CD4-positive, alpha-beta T cell (primary cell): ENCODE measurements at regions of chr5 and their contacts with region 1.

Region 1: GRCh38 chr5:178058321-178059012 is 54.9 kb upstream of the N4BP3 start:
- DNase-seq: no peak
- ATAC-seq: no peak
- H3K4me3 ChIP-seq: no peak overlapping the region
- H3K4me3 Mint-ChIP-seq: no peak overlapping the region
- H3K27ac ChIP-seq: no peak overlapping the region
- H3K27ac Mint-ChIP-seq: no peak overlapping the region
- H3K4me1 ChIP-seq: peaks cover 4% of the 10 kb centered on the region
- H3K4me1 Mint-ChIP-seq: peaks cover 5% of the 10 kb centered on the region
- H3K27me3 ChIP-seq: no peaks in the 10 kb centered on the region
- H3K27me3 Mint-ChIP-seq: no peaks in the 10 kb centered on the region
- CTCF ChIP-seq: no peak

Region 2: GRCh38 chr5:177607452-177608192 is 450.8 kb before region 1 on chr5:
- CTCF ChIA-PET with region 1: no interaction called
- POLR2A ChIA-PET with region 1: no interaction called
- intact Hi-C with region 1: loop called in 1 of 2 experiments (anchors 1 kb)
- DNase-seq: peak; percentile 37 to 78 (median 57)
- ATAC-seq: peak; percentile 95
- H3K4me3 ChIP-seq: no peak overlapping the region
- H3K4me3 Mint-ChIP-seq: no peak overlapping the region
- H3K27ac ChIP-seq: no peak overlapping the region
- H3K27ac Mint-ChIP-seq: no peak overlapping the region
- H3K4me1 ChIP-seq: peaks cover 11% of the 10 kb centered on the region
- H3K4me1 Mint-ChIP-seq: peaks cover 22% of the 10 kb centered on the region
- H3K27me3 ChIP-seq: no peaks in the 10 kb centered on the region
- H3K27me3 Mint-ChIP-seq: no peaks in the 10 kb centered on the region
- CTCF ChIP-seq: peak; percentile 70

Region 3: GRCh38 chr5:178163772-178164735 is 105.6 kb after region 1 on chr5:
- CTCF ChIA-PET with region 1: no interaction called
- POLR2A ChIA-PET with region 1: no interaction called
- intact Hi-C with region 1: no loop called
- DNase-seq: peak; percentile 82 to 97 (median 92)
- ATAC-seq: peak; percentile 100
- H3K4me3 ChIP-seq: no peak overlapping the region
- H3K4me3 Mint-ChIP-seq: no peak overlapping the region
- H3K27ac ChIP-seq: no peak overlapping the region
- H3K27ac Mint-ChIP-seq: no peak overlapping the region
- H3K4me1 ChIP-seq: peaks cover 7% of the 10 kb centered on the region
- H3K4me1 Mint-ChIP-seq: peaks cover 10% of the 10 kb centered on the region
- H3K27me3 ChIP-seq: no peaks in the 10 kb centered on the region
- H3K27me3 Mint-ChIP-seq: peaks cover 18% of the 10 kb centered on the region
- CTCF ChIP-seq: peak; percentile 92